ENCODE measurements at regions of chr19 and their contacts with region 1.

Region 1: GRCh38 chr19:47035127-47036096 is 13.0 kb downstream of the TMEM160 start:
- DNase-seq: peak; percentile 98
- H3K4me3 Mint-ChIP-seq: peak overlapping the region; percentile 81
- H3K27ac Mint-ChIP-seq: peak overlapping the region; percentile 73
- H3K4me1 Mint-ChIP-seq: peaks cover 16% of the 10 kb centered on the region
- H3K27me3 Mint-ChIP-seq: peaks cover 10% of the 10 kb centered on the region

Region 2: GRCh38 chr19:47013041-47013517 is 22.3 kb before region 1 on chr19:
- CTCF ChIA-PET with region 1: interaction called, 20 read pairs
- POLR2A ChIA-PET with region 1: no interaction called
- intact Hi-C with region 1: loop called (anchors 2 kb)
- DNase-seq: peak; percentile 77
- H3K4me3 Mint-ChIP-seq: no peak overlapping the region
- H3K27ac Mint-ChIP-seq: no peak overlapping the region
- H3K4me1 Mint-ChIP-seq: peaks cover 10% of the 10 kb centered on the region
- H3K27me3 Mint-ChIP-seq: peaks cover 4% of the 10 kb centered on the region

Region 3: GRCh38 chr19:47047763-47048405 is 12.5 kb after region 1 on chr19:
- CTCF ChIA-PET with region 1: interaction called, 5 read pairs
- POLR2A ChIA-PET with region 1: interaction called, 13 read pairs
- intact Hi-C with region 1: loop called (anchors 1 kb)
- DNase-seq: peak; percentile 91
- H3K4me3 Mint-ChIP-seq: peak overlapping the region; percentile 99
- H3K27ac Mint-ChIP-seq: peak overlapping the region; percentile 87
- H3K4me1 Mint-ChIP-seq: peaks cover 12% of the 10 kb centered on the region
- H3K27me3 Mint-ChIP-seq: peaks cover 1% of the 10 kb centered on the region

Region 4: DNA sequence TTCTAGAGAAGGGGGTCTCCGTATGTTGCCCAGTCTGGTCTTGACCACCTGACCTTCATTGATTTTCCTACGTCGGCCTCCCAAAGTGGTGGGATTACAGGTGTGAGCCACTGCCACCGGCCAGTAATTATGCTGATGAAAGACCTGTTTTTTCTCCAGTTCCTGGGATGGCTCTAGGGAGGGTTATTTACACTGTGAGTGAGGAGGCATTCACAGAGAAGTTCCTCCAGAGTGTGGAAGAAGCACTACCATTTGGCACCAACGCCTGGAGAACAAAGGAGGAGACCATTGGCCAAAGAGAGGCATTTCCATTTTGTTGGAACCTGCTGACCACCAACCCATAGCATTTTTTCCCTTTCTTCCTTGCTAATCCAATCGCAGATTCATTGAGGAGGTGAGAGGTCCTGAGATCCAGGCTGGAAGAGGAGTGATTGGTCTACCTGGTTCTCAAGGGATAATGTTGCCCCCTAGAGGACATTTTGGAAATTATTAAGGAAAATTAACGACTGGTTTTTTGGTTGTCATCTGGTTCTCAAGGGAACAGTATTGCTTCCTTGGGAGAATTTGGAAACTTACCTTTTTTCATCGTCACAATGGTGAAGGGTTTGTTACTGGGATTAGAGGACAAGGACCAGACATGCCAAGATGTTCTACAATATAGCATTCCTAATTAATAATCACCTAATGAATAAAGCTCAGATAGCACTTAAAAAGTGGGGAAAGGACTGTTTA is 89.7 kb after region 1 on chr19:
- CTCF ChIA-PET with region 1: interaction called, 14 read pairs
- POLR2A ChIA-PET with region 1: no interaction called
- intact Hi-C with region 1: loop called (anchors 1 kb)
- DNase-seq: no peak
- H3K4me3 Mint-ChIP-seq: no peak overlapping the region
- H3K27ac Mint-ChIP-seq: peak overlapping the region; percentile 21
- H3K4me1 Mint-ChIP-seq: peaks cover 2% of the 10 kb centered on the region
- H3K27me3 Mint-ChIP-seq: no peaks in the 10 kb centered on the region

Region 5: DNA sequence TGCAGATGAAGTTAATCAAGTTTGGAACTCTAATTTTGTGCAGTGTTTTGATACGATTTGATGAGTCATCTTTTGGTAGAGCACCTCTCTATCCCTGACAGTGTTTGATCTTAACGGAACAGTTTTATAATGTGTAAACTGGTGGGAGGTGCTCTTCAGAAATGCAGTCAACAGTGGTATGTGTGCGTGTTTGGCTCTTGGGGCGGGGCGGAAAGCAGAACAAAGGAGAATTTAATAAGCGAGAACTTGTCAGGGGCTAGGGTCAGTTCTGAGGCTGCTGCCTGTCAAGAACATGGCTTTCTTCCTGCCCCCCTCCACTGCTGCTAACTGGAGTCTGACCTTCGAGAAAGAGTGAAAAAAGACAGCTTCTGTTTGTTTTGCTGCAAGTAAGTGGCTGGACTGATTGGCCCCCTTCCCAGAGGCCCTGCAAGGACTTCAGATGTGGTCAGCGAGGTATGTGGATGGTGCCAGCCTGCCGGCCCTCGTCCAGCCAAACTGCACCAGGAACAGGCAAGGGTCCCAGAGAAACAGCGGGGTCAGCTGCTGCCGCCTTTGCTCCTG is 154.8 kb after region 1 on chr19:
- CTCF ChIA-PET with region 1: interaction called, 8 read pairs
- POLR2A ChIA-PET with region 1: interaction called, 3 read pairs
- intact Hi-C with region 1: loop called (anchors 5 kb)
- DNase-seq: peak; percentile 84
- H3K4me3 Mint-ChIP-seq: peak overlapping the region; percentile 58
- H3K27ac Mint-ChIP-seq: peak overlapping the region; percentile 68
- H3K4me1 Mint-ChIP-seq: peaks cover 65% of the 10 kb centered on the region
- H3K27me3 Mint-ChIP-seq: no peaks in the 10 kb centered on the region

Measured in activated CD4-positive, alpha-beta memory T cell treated with anti-CD3 and anti-CD28 coated beads for 36 hours (primary cell).